ENCODE measurements at regions of chr16 and their contacts with region 1.

Region 1: DNA sequence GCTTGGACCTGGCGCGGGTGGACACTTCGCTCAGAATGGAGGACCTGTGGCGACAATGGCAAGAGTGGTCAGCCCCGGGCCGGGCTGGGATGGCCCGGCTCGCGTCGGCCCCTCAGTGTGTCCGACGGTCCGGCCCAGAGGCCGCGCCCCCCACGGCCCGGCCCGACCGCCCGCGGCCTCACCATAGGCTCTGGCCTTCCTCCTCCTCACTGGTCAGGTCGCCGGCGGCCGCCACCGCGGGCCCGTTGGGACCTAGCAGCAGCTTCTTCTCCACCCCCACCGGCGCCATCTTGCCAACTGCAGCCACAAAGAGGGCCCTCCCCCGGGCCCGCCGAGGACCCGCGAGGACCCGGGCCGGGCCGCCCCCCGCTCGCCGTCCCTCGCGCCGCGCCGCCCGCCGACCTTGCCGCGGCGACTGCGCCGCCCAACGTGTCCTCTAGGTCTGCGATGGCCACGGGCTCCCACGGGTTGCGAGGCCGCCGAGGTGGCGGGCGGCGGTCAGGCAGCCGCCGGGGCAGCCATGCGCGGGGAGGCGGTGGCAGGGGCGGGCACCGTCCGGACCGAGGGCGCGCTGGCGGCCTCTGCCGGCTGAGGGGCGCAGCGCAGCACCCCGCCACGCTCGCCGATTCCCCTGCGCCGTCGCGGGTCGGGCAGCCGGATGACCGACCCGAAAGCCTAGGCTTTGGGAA is at the start of gene DYNC1LI2:
- DNase-seq: peak; percentile 85
- ATAC-seq: peak; percentile 97
- H3K4me3 Mint-ChIP-seq: peak within 1 kb of the TSS; percentile 82
- H3K27ac Mint-ChIP-seq: peak within 1 kb of the TSS; percentile 88
- H3K4me1 Mint-ChIP-seq: peaks cover 42% of the 10 kb centered on the region
- H3K27me3 Mint-ChIP-seq: peaks cover 5% of the 10 kb centered on the region
- CTCF ChIP-seq: peak; percentile 88
- total RNA-seq, gene DYNC1LI2: 35.0 to 39.5 TPM

Region 2: DNA sequence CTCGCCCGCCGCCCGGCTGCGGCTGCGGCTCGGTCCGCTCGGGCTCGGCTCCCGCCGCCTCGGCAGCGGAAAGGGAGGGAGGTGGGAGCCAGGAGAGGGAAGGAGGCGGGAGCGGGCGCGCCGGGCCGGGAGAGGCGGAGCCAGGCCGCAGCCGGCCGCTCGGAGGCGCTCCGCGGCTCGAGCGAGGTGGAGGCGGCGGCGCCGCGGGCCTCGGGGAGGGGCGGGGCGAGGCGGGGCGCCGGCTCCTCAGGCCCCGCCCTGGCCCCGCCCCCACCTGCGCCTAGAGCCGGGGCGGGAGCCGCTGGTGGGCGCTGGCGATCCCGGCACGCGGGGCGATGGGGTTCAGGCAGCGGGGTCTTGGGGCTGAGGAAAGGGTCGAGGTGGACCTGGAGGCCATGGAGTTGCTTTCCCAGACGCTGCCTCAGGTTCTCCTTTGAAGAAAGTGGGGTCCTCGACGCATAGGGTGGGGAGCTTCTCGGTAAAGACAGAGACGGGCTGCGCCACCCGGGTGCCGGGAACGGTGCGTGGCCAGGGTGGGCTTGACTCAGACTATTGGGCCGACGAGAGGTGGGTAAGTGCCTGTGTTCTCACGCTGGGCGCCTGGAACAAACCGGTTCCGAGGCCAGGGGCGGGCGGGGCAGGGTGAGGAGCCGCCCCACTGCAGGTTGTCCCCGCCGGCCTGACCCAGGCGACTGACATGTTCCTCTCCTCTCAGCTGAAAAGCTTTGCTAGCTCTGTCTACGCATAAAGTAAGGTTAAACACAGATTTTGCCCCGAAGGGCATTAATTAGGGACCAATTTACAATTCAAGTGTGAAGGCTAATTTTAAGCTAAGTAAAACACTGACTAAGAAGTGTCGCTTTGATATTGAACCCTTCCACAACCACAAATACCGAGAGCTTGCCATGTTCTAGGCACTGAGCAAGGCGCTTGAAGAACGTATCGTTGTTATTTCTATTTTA is 54.5 kb before region 1 on chr16 and contains the start of gene CMTM4:
- CTCF ChIA-PET with region 1: interaction called, 11 read pairs
- POLR2A ChIA-PET with region 1: interaction called, 3 read pairs
- intact Hi-C with region 1: no loop called
- DNase-seq: peak; percentile 70
- ATAC-seq: peak; percentile 97
- H3K4me3 Mint-ChIP-seq: peak within 1 kb of the TSS; percentile 74
- H3K27ac Mint-ChIP-seq: no peak within 1 kb of the TSS
- H3K4me1 Mint-ChIP-seq: peaks cover 12% of the 10 kb centered on the region
- H3K27me3 Mint-ChIP-seq: peaks cover 13% of the 10 kb centered on the region
- CTCF ChIP-seq: peak; percentile 29
- total RNA-seq, gene CMTM4: 3.2 to 3.5 TPM

Region 3: DNA sequence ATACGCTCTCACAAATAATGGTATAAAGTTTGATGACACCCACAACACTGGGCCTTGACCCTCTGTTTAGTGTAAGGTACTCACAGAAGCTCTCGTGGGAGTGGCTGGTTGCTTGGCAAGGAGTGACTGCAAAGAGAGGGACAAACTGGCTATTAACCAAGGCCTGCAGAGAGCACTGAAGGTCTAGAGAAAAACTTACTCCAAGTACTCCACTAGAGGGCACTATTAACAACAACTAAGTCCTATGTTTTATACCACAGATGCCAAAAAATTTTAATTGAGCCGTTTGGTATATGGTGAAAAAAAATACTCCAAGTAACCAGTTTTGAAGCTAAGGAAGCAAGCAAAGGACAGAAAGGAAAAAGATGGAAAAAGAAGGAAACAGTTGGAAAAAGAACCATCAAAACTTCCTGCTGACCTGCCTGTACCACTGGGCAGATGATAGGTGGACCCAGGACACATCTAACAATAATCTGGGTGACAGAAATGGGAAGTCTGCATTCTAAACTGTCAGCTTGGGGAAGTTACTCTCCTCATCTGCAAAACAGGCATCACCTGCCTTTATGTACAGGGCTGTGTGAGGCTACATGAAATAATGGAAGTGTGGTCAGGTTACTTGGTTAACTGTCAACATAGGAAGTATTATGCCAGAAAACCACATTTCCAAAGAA is 23.2 kb before region 1 on chr16:
- CTCF ChIA-PET with region 1: interaction called, 25 read pairs
- POLR2A ChIA-PET with region 1: interaction called, 3 read pairs
- intact Hi-C with region 1: no loop called
- DNase-seq: no peak
- ATAC-seq: peak; percentile 80
- H3K4me3 Mint-ChIP-seq: no peak overlapping the region
- H3K27ac Mint-ChIP-seq: peak overlapping the region; percentile 65
- H3K4me1 Mint-ChIP-seq: peaks cover 4% of the 10 kb centered on the region
- H3K27me3 Mint-ChIP-seq: no peaks in the 10 kb centered on the region
- CTCF ChIP-seq: peak; percentile 72

Region 4: GRCh38 chr16:66740010-66740409 is 11.4 kb before region 1 on chr16:
- CTCF ChIA-PET with region 1: interaction called, 25 read pairs
- POLR2A ChIA-PET with region 1: interaction called, 8 read pairs
- intact Hi-C with region 1: no loop called
- DNase-seq: peak; percentile 61
- ATAC-seq: peak; percentile 76
- H3K4me3 Mint-ChIP-seq: no peak overlapping the region
- H3K27ac Mint-ChIP-seq: peak overlapping the region; percentile 8
- H3K4me1 Mint-ChIP-seq: peaks cover 16% of the 10 kb centered on the region
- H3K27me3 Mint-ChIP-seq: no peaks in the 10 kb centered on the region
- CTCF ChIP-seq: peak; percentile 66

Region 5: GRCh38 chr16:66824006-66824405 is 72.6 kb after region 1 on chr16:
- CTCF ChIA-PET with region 1: interaction called, 25 read pairs
- POLR2A ChIA-PET with region 1: interaction called, 3 read pairs
- intact Hi-C with region 1: no loop called
- DNase-seq: no peak
- ATAC-seq: no peak
- H3K4me3 Mint-ChIP-seq: no peak overlapping the region
- H3K27ac Mint-ChIP-seq: no peak overlapping the region
- H3K4me1 Mint-ChIP-seq: peaks cover 24% of the 10 kb centered on the region
- H3K27me3 Mint-ChIP-seq: no peaks in the 10 kb centered on the region
- CTCF ChIP-seq: no peak

Region 6: DNA sequence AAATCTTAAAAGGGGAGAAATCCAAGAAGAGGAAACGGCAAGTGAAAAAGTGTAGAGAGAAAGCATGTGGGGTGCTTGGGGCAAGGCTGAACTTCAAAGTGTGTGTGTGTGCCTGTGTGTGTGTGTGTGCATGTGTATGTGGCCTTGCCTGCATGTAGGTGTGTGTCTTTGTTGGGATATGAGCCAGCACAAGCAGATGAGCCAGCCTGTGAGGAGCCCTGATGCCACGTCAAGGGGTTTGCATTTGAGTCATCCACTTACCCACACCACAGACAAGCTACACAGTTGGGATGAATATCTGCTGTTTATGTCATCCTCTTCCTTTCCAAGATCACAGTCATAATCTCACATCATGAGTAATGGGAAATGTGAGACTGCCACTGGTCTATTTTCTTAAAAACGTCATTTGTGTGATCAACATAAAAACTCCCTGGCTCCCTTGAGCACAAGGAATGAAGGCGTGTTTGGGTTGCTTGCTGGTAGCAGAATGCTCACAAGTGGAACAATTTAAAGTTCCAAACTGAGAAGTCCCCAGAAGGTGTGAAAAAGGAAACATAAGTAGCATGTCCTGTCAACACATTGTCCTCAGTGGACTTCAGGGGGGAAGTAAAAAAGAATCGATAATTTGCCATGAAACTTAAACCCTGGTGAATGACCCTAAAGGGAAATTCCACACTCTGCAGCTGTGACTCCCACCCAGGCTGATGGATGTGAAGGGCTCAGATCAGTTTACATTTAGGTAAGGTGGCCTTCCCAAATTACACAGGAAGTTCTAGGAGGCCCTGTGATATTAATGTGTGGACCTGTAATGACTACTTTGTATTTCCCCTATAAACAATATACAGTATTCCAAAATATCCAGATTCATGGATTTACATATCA is 560.4 kb after region 1 on chr16:
- CTCF ChIA-PET with region 1: no interaction called
- POLR2A ChIA-PET with region 1: no interaction called
- intact Hi-C with region 1: no loop called
- DNase-seq: peak; percentile 97
- ATAC-seq: peak; percentile 95
- H3K4me3 Mint-ChIP-seq: peak overlapping the region; percentile 9
- H3K27ac Mint-ChIP-seq: peak overlapping the region; percentile 94
- H3K4me1 Mint-ChIP-seq: peaks cover 36% of the 10 kb centered on the region
- H3K27me3 Mint-ChIP-seq: peaks cover 3% of the 10 kb centered on the region
- CTCF ChIP-seq: no peak

Measured in activated CD8-positive, alpha-beta T cell treated with anti-CD3 and anti-CD28 coated beads for 36 hours (primary cell).